Activated naive CD4-positive, alpha-beta T cell treated with anti-CD3 and anti-CD28 coated beads for 36 hours (primary cell): ENCODE measurements at regions of chr1 and their contacts with region 1.

Region 1: DNA sequence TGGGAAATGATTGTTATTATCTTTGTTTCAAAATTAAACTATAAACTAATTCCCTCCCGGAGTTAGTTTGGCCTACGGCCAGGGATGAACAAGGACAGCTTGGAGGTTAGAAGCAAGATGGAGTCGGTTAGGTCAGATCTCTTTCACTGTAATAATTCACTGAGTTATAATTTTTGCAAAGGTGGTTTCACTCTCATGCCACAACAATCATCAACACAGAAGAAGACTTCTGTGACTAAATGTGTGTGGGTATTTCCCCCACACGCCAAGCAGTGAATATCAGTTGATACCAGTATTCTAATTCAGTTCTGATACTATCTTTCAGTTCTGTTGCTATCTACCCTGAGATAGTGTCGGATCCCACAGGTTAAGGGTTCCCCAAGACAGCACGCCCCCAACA is 215.1 kb downstream of the S1PR1 start:
- DNase-seq: peak; percentile 48
- H3K4me3 Mint-ChIP-seq: no peak overlapping the region
- H3K27ac Mint-ChIP-seq: no peak overlapping the region
- H3K4me1 Mint-ChIP-seq: peaks cover 40% of the 10 kb centered on the region
- H3K27me3 Mint-ChIP-seq: peaks cover 3% of the 10 kb centered on the region

Region 2: GRCh38 chr1:100810360-100810759 is 641.5 kb before region 1 on chr1:
- CTCF ChIA-PET with region 1: no interaction called
- intact Hi-C with region 1: no loop called
- DNase-seq: no peak
- H3K4me3 Mint-ChIP-seq: no peak overlapping the region
- H3K27ac Mint-ChIP-seq: no peak overlapping the region
- H3K4me1 Mint-ChIP-seq: no peaks in the 10 kb centered on the region
- H3K27me3 Mint-ChIP-seq: peaks cover 7% of the 10 kb centered on the region

Region 3: GRCh38 chr1:101051688-101052638 is 399.9 kb before region 1 on chr1:
- CTCF ChIA-PET with region 1: no interaction called
- intact Hi-C with region 1: loop called (anchors 5 kb)
- DNase-seq: peak; percentile 64
- H3K4me3 Mint-ChIP-seq: no peak overlapping the region
- H3K27ac Mint-ChIP-seq: peak overlapping the region; percentile 48
- H3K4me1 Mint-ChIP-seq: peaks cover 17% of the 10 kb centered on the region
- H3K27me3 Mint-ChIP-seq: no peaks in the 10 kb centered on the region

Region 4: GRCh38 chr1:101257500-101258325 is 194.2 kb before region 1 on chr1:
- CTCF ChIA-PET with region 1: no interaction called
- intact Hi-C with region 1: no loop called
- DNase-seq: no peak
- H3K4me3 Mint-ChIP-seq: no peak overlapping the region
- H3K27ac Mint-ChIP-seq: no peak overlapping the region
- H3K4me1 Mint-ChIP-seq: peaks cover 66% of the 10 kb centered on the region
- H3K27me3 Mint-ChIP-seq: no peaks in the 10 kb centered on the region

Region 5: DNA sequence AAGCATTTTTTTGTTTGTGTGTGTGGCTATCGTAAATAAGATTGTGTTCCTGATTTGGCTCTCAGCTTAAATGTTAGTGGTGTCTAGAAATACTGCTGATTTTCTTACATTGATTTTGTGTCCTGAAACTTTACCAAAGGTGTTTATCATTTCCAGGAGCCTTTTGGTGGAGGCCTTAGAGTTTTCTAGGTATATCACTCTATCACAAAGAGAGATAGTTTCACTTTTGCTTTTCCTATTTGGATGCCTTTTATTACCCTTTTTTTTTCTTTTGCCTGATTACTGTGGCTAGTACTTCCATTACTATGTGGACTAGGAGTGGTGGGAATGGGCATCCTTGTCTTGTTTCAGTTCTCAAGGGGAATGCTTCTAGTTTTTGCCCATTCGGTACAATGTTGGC is 105.5 kb before region 1 on chr1:
- CTCF ChIA-PET with region 1: no interaction called
- intact Hi-C with region 1: no loop called
- DNase-seq: no peak
- H3K4me3 Mint-ChIP-seq: no peak overlapping the region
- H3K27ac Mint-ChIP-seq: no peak overlapping the region
- H3K4me1 Mint-ChIP-seq: peaks cover 28% of the 10 kb centered on the region
- H3K27me3 Mint-ChIP-seq: no peaks in the 10 kb centered on the region

Region 6: DNA sequence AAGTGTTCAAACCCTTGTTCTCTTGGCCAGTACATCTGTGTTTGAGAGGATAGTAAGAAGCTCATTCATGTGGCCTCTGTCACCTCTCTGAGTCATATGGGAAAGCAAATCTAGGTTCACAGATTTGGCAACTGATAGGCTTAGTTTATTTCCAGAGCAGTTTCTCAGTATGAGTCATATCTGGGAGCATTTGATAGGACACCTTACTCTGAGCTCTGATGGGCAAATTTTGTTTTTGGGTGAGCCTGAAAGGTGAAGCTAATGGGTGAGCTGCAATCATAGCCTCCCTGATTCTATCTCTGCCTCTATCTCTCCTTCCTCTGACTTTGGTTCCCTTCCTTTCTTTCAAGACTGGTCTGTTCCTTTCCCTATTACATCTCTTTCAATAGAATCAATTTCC is 80.6 kb before region 1 on chr1:
- CTCF ChIA-PET with region 1: no interaction called
- intact Hi-C with region 1: loop called (anchors 5 kb)
- DNase-seq: peak; percentile 26
- H3K4me3 Mint-ChIP-seq: no peak overlapping the region
- H3K27ac Mint-ChIP-seq: peak overlapping the region; percentile 18
- H3K4me1 Mint-ChIP-seq: peaks cover 11% of the 10 kb centered on the region
- H3K27me3 Mint-ChIP-seq: no peaks in the 10 kb centered on the region

Region 7: DNA sequence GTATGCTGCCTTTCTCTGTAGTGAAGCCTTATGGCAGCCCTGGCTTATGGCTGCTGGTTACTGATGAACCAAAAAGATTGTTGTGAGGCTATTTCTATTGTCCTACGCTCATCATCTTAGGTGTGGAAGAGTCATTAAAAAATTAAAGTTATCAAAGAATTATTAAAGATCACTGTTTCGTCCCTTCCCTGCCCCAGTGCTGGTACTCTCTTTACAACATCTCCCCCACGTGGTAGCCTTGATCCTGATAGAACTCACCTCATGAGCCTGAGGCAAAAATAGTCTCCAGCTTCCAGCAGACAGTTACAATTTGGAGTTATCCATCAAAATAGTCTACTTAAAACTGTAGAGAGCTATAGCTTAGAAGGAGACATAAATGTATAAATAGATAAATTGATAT is 13.5 kb before region 1 on chr1:
- CTCF ChIA-PET with region 1: no interaction called
- intact Hi-C with region 1: no loop called
- DNase-seq: peak; percentile 20
- H3K4me3 Mint-ChIP-seq: no peak overlapping the region
- H3K27ac Mint-ChIP-seq: no peak overlapping the region
- H3K4me1 Mint-ChIP-seq: no peaks in the 10 kb centered on the region
- H3K27me3 Mint-ChIP-seq: no peaks in the 10 kb centered on the region